Endothelial cell of umbilical vein (primary cell): ENCODE measurements at regions of chr10 and their contacts with region 1.

Region 1: GRCh38 chr10:86376852-86377796 is 10.5 kb upstream of the GRID1 start:
- DNase-seq: peak; percentile 56
- H3K4me3 ChIP-seq: no peak overlapping the region
- H3K27ac ChIP-seq: no peak overlapping the region
- H3K4me1 ChIP-seq: no peaks in the 10 kb centered on the region
- H3K27me3 ChIP-seq: peaks cover 10 to 11% of the 10 kb centered on the region in 2 experiments
- CTCF ChIP-seq: peak; percentile 96
- POLR2A ChIP-seq: no peak

Region 2: GRCh38 chr10:84783386-84783785 is 1593.7 kb before region 1 on chr10:
- CTCF ChIA-PET with region 1: interaction called, 4 read pairs
- POLR2A ChIA-PET with region 1: no interaction called
- dilution Hi-C with region 1: no loop called
- intact Hi-C with region 1: loop called (anchors 1 kb)
- DNase-seq: peak; percentile 14
- H3K4me3 ChIP-seq: no peak overlapping the region
- H3K27ac ChIP-seq: no peak overlapping the region
- H3K4me1 ChIP-seq: no peaks in the 10 kb centered on the region
- H3K27me3 ChIP-seq: no peaks in the 10 kb centered on the region
- CTCF ChIP-seq: peak; percentile 32 to 54
- POLR2A ChIP-seq: no peak

Region 3: GRCh38 chr10:85548034-85548433 is 829.1 kb before region 1 on chr10:
- CTCF ChIA-PET with region 1: no interaction called
- POLR2A ChIA-PET with region 1: no interaction called
- dilution Hi-C with region 1: no loop called
- intact Hi-C with region 1: loop called (anchors 1 kb)
- DNase-seq: peak; percentile 9
- H3K4me3 ChIP-seq: no peak overlapping the region
- H3K27ac ChIP-seq: no peak overlapping the region
- H3K4me1 ChIP-seq: no peaks in the 10 kb centered on the region
- H3K27me3 ChIP-seq: no peaks in the 10 kb centered on the region
- CTCF ChIP-seq: peak; percentile 20 to 35
- POLR2A ChIP-seq: no peak

Region 4: DNA sequence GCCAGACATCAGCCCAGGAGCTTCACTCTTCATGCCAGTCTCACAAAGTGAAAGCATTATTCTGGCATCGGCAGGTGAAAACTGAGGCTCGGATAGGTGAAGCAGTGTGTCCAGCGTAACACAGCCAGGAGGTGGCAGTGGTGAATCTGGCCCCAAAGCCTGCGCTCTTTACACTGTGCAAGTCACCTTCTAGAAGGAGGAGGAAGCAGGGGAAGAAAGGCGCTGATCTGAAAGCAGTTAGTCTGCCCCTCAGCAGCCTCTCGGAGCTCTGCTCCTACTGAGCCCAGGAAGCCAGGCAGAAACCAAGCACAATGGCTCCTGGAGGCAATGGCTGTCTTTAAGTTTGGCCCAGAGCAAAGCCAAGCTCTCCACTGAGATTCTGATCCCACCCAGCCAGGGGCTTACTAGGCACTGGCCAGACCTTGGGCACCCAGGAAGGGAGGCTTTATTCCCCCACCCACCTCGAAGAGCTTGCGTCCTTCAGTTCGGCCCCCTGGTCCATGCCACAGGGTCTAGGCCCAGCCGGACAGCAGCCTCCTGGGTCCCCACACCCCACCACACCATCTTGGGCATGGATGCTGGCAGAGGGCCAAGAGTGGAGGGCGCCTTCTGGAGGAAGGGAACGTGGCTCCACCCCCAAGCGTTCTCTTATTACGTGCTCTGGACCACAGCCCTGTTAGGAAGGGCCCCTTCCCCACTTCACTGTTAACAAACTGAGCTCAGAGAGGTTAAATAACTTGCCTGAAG is 115.0 kb before region 1 on chr10:
- CTCF ChIA-PET with region 1: no interaction called
- POLR2A ChIA-PET with region 1: no interaction called
- dilution Hi-C with region 1: no loop called
- intact Hi-C with region 1: loop called (anchors 5 kb)
- DNase-seq: no peak
- H3K4me3 ChIP-seq: no peak overlapping the region
- H3K27ac ChIP-seq: no peak overlapping the region
- H3K4me1 ChIP-seq: no peaks in the 10 kb centered on the region
- H3K27me3 ChIP-seq: no peaks in the 10 kb centered on the region
- CTCF ChIP-seq: no peak
- POLR2A ChIP-seq: no peak

Region 5: GRCh38 chr10:86603256-86603655 is 226.1 kb after region 1 on chr10:
- CTCF ChIA-PET with region 1: no interaction called
- POLR2A ChIA-PET with region 1: no interaction called
- dilution Hi-C with region 1: no loop called
- intact Hi-C with region 1: no loop called
- DNase-seq: no peak
- H3K4me3 ChIP-seq: no peak overlapping the region
- H3K27ac ChIP-seq: no peak overlapping the region
- H3K4me1 ChIP-seq: no peaks in the 10 kb centered on the region
- H3K27me3 ChIP-seq: peaks cover 0 to 2% of the 10 kb centered on the region in 2 experiments
- CTCF ChIP-seq: no peak
- POLR2A ChIP-seq: no peak